BJ (cell line): ENCODE measurements at regions of chr2 and their contacts with region 1.

Region 1: DNA sequence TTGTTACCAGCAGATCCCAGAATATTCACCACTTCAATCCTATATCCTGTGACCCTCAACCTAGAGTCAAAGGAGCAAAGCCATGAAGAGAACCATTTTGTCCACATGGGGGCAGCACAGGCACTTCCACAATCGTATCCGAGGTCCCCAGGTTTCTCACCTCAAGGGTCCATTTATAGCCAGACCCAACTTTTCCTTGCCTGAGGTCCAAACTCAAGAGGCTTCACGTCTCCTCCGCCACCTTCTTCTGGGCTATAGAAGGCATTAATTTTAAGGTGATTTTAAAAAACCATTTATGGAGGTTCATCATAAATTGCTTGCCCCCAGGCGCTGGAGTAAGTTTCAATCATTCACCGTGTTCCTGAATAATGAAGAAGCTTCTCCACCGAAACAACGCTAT is 111.6 kb upstream of the NABP1 start:
- DNase-seq: no peak
- H3K4me3 ChIP-seq: no peak overlapping the region
- H3K27me3 ChIP-seq: no peaks in the 10 kb centered on the region
- CTCF ChIP-seq: peak; percentile 87

Region 2: GRCh38 chr2:191691016-191691735 is 124.8 kb after region 1 on chr2:
- CTCF ChIA-PET with region 1: interaction called, 23 read pairs
- POLR2A ChIA-PET with region 1: interaction called, 14 read pairs
- DNase-seq: peak; percentile 69
- H3K4me3 ChIP-seq: no peak overlapping the region
- H3K27me3 ChIP-seq: no peaks in the 10 kb centered on the region
- CTCF ChIP-seq: peak; percentile 76

Region 3: GRCh38 chr2:191713837-191714236 is 147.5 kb after region 1 on chr2:
- CTCF ChIA-PET with region 1: no interaction called
- POLR2A ChIA-PET with region 1: no interaction called
- DNase-seq: no peak
- H3K4me3 ChIP-seq: no peak overlapping the region
- H3K27me3 ChIP-seq: no peaks in the 10 kb centered on the region
- CTCF ChIP-seq: no peak